Breast epithelium (tissue), 4 donors: ENCODE measurements at regions of chr5 and their contacts with region 1.

Region 1: DNA sequence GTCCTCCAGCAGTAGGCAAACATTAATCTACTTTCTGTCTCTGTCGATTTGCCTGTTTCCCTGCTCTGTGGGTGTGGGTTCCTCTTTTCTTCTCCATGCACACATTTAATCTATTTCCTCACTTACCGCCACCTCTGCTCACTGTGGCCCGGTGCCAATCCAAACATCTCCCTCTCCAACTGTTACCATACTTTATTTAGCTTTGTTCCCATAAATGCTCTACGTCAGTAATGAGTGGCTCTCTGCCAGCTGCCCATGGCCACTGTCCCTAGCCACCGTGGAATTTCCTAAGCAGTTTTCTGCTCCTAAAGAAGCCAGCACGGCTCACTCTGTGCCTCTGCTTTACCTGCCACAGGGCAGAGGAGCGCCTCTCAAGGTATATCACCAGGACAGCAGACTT is 19.5 kb upstream of the GOLPH3 start:
- DNase-seq: peak; percentile 87 to 89
- H3K4me3 ChIP-seq: peak overlapping the region in 2 of 3 donors; percentile 26 to 52
- H3K27ac ChIP-seq: peak overlapping the region; percentile 41 to 80
- H3K4me1 ChIP-seq: no peaks in the 10 kb centered on the region
- H3K27me3 ChIP-seq: no peaks in the 10 kb centered on the region
- CTCF ChIP-seq: no peak
- POLR2A ChIP-seq: no peak

Region 2: GRCh38 chr5:32163785-32164184 is 29.8 kb before region 1 on chr5:
- intact Hi-C with region 1: no loop called
- DNase-seq: no peak
- H3K4me3 ChIP-seq: no peak overlapping the region
- H3K27ac ChIP-seq: no peak overlapping the region
- H3K4me1 ChIP-seq: peaks cover 0 to 4% of the 10 kb centered on the region in 2 donors
- H3K27me3 ChIP-seq: no peaks in the 10 kb centered on the region
- CTCF ChIP-seq: no peak
- POLR2A ChIP-seq: no peak

Region 3: DNA sequence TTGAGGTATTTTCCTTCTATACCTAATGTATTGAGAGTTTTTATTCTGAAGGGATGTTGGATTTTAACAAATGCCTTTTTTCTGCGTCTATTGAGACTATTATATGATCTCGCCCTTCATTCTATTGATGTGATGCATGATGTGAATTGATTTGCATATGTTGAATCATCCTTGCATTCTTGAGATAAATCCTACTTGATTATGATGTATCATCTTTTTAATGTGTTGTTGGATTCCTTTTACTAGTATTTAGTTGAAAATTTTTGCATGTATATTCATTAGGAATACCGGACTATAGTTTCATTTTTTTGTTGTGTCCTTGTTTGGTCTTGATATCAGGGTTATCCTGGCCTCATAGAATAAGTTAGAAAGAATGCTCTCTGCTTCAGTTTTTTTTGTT is 687.2 kb after region 1 on chr5:
- intact Hi-C with region 1: no loop called
- DNase-seq: no peak
- H3K4me3 ChIP-seq: no peak overlapping the region
- H3K27ac ChIP-seq: no peak overlapping the region
- H3K4me1 ChIP-seq: no peaks in the 10 kb centered on the region
- H3K27me3 ChIP-seq: no peaks in the 10 kb centered on the region
- CTCF ChIP-seq: no peak
- POLR2A ChIP-seq: no peak

Region 4: GRCh38 chr5:33409435-33410170 is 1216.0 kb after region 1 on chr5:
- intact Hi-C with region 1: loop called (anchors 5 kb)
- DNase-seq: peak in 1 of 2 donors; percentile 23
- H3K4me3 ChIP-seq: no peak overlapping the region
- H3K27ac ChIP-seq: peak overlapping the region in 1 of 2 donors; percentile 43
- H3K4me1 ChIP-seq: no peaks in the 10 kb centered on the region
- H3K27me3 ChIP-seq: no peaks in the 10 kb centered on the region
- CTCF ChIP-seq: no peak
- POLR2A ChIP-seq: no peak